ENCODE measurements at regions of chr3 and their contacts with region 1.

Region 1: GRCh38 chr3:188205992-188206416 is 52.0 kb downstream of the LPP start:
- DNase-seq: no peak
- H3K4me3 ChIP-seq: no peak overlapping the region
- H3K27ac ChIP-seq: peak overlapping the region; percentile 7 to 96
- H3K4me1 ChIP-seq: peaks cover 11 to 53% of the 10 kb centered on the region in 2 donors
- H3K27me3 ChIP-seq: no peaks in the 10 kb centered on the region
- CTCF ChIP-seq: peak in 2 of 3 experiments; percentile 20 to 27

Region 2: GRCh38 chr3:187802928-187803259 is 403.1 kb before region 1 on chr3:
- intact Hi-C with region 1: no loop called
- DNase-seq: no peak
- H3K4me3 ChIP-seq: no peak overlapping the region
- H3K27ac ChIP-seq: no peak overlapping the region
- H3K4me1 ChIP-seq: no peaks in the 10 kb centered on the region
- H3K27me3 ChIP-seq: no peaks in the 10 kb centered on the region
- CTCF ChIP-seq: no peak

Region 3: DNA sequence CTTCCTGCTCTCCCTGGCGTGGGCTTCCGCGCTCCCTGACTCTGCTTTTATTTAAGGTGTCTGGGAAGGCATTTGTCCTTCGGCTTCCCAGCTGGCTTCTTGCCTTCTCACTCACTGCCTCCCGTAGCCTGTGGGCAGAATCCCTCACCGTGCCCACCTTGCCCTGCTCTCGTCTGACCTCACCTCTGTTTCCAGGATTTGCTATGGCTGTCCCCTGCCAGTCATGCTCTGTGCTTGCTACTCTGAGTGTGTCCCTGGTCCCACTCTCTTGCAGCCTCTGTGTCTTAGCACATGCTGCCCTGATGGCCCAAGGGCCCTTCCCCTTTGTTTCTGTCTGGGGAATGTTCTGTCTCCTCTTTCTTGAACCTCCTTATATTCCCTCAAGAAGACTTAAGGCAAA is 25.9 kb before region 1 on chr3:
- intact Hi-C with region 1: loop called (anchors 2 kb)
- DNase-seq: no peak
- H3K4me3 ChIP-seq: no peak overlapping the region
- H3K27ac ChIP-seq: peak overlapping the region; percentile 90 to 92
- H3K4me1 ChIP-seq: peaks cover 15 to 69% of the 10 kb centered on the region in 2 donors
- H3K27me3 ChIP-seq: no peaks in the 10 kb centered on the region
- CTCF ChIP-seq: no peak

Region 4: DNA sequence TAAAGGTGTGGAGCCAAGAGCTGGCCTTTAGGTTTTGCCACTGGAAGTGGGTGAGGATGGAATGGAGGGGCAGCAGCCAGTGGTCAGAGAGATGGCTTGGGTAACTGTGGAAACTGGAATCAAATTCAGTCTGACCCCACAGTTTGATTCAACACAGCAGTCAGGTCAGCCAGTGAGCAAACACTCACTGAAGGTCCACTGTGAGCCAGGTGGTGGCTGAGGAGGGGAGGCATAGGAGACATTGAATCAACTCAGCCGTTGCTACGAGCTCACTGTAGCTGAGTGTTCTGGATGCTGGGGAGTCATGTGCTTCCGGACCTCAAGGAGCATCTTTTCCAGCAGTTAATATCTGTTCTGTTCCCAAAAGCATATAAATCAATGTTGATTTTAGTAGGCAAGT is 14.5 kb before region 1 on chr3:
- intact Hi-C with region 1: loop called (anchors 2 kb)
- DNase-seq: no peak
- H3K4me3 ChIP-seq: no peak overlapping the region
- H3K27ac ChIP-seq: peak overlapping the region in 1 of 2 donors; percentile 32
- H3K4me1 ChIP-seq: peaks cover 3 to 56% of the 10 kb centered on the region in 2 donors
- H3K27me3 ChIP-seq: no peaks in the 10 kb centered on the region
- CTCF ChIP-seq: no peak

Region 5: GRCh38 chr3:188283347-188283746 is 77.3 kb after region 1 on chr3:
- intact Hi-C with region 1: no loop called
- DNase-seq: no peak
- H3K4me3 ChIP-seq: no peak overlapping the region
- H3K27ac ChIP-seq: peak overlapping the region; percentile 94 to 99
- H3K4me1 ChIP-seq: peaks cover 26 to 80% of the 10 kb centered on the region in 2 donors
- H3K27me3 ChIP-seq: no peaks in the 10 kb centered on the region
- CTCF ChIP-seq: no peak

Measured in ascending aorta (tissue), 2 donors.